ENCODE measurements at regions of chr1 and their contacts with region 1.

Region 1: DNA sequence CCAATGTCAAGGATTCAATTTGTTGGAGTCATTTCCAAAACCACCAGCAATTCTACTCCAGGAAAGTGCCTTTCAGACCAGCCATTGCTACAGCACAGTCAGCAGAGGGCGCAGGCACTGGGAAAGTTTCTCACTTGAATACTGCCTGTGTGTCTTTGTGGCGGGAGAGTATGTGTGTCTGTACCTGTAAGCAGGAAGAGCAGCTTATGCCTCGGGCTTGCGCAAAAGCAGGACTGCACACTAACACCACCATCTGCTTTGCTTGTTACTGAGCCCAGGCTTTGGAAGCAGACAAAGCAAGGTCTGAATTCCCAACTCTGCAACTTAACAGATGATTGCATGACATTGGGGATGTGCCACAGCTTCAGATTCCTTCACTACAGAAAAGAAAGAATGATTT is 7.0 kb upstream of the CTSE start:
- DNase-seq: peak; percentile 93
- H3K4me3 ChIP-seq: no peak overlapping the region
- H3K27ac ChIP-seq: peak overlapping the region; percentile 1
- H3K4me1 ChIP-seq: peaks cover 43% of the 10 kb centered on the region
- CTCF ChIP-seq: peak; percentile 99

Region 2: DNA sequence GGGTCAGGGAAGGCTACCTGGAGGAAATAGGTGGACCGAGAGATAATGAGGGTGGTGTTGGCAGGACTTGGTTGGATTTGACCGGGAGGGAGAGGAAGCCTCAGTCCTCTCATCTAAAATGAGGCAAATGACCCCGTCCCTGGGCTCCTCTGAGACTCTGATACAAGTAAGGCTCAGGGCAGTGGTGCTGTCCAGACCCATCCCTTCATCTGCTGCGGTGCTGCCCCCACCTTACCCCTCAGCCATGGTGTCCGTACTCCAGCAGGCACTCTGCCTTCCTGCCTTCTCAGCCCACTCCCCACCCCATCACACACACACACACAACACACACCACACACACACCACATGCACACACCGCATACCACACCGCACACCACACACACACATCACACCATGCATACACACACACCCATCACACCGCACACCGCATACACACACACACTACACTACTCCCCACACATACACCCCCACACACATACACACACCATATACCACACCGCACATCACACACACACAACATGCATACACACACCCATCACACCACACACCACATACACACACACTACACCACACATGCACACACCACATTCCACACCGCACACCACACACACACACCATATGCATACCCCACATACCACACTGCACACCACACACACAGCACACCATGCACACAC is 58.1 kb before region 1 on chr1:
- CTCF ChIA-PET with region 1: no interaction called
- POLR2A ChIA-PET with region 1: no interaction called
- intact Hi-C with region 1: no loop called
- DNase-seq: no peak
- H3K4me3 ChIP-seq: no peak overlapping the region
- H3K27ac ChIP-seq: no peak overlapping the region
- H3K4me1 ChIP-seq: no peaks in the 10 kb centered on the region
- CTCF ChIP-seq: no peak

Region 3: GRCh38 chr1:205983925-205984725 is 46.6 kb before region 1 on chr1:
- CTCF ChIA-PET with region 1: interaction called, 3 read pairs
- POLR2A ChIA-PET with region 1: no interaction called
- intact Hi-C with region 1: loop called (anchors 1 kb)
- DNase-seq: peak; percentile 72
- H3K4me3 ChIP-seq: no peak overlapping the region
- H3K27ac ChIP-seq: no peak overlapping the region
- H3K4me1 ChIP-seq: no peaks in the 10 kb centered on the region
- CTCF ChIP-seq: peak; percentile 91